ENCODE measurements at regions of chr19 and their contacts with region 1.

Region 1: DNA sequence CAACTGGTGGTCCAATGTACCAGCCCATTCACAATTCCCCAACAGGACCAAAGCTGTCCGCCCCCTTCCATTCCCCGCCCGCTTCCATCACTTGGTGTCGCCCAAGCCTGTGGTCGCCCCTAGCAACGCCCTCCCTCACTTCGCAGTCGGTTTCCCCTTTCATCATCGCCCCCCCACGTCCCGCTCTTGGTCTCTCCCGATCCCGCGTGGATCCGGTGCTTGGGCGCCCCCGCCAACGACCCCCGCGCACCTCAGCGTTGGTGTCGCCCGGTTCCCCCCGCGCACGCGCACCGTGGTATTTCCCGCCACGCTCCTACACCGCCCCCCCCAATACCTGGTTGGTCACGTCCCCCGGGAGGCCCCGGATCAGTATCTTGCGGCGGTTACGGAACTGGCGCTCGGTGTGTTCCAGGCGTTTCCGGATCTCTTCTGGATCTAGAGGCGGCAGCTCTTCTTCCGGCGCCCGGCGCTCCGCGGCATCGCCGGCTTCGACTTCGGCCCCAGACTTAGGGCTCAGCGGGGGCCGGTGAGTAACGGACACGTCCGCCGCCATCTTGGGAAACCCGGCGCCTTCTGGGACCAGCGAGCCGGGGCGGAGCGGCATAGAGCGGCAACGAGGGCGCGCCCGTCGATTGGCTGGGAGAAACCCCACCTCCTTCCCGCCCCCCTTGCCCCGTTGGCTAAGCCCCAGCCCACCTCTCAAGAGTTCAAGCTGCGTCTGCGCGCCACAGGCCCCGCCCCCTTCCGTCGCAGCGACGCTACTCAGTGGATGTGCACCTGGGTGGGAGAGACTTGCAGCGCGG is at the start of gene RAVER1:
- DNase-seq: peak; percentile 96 to 99 (median 98)

Region 2: DNA sequence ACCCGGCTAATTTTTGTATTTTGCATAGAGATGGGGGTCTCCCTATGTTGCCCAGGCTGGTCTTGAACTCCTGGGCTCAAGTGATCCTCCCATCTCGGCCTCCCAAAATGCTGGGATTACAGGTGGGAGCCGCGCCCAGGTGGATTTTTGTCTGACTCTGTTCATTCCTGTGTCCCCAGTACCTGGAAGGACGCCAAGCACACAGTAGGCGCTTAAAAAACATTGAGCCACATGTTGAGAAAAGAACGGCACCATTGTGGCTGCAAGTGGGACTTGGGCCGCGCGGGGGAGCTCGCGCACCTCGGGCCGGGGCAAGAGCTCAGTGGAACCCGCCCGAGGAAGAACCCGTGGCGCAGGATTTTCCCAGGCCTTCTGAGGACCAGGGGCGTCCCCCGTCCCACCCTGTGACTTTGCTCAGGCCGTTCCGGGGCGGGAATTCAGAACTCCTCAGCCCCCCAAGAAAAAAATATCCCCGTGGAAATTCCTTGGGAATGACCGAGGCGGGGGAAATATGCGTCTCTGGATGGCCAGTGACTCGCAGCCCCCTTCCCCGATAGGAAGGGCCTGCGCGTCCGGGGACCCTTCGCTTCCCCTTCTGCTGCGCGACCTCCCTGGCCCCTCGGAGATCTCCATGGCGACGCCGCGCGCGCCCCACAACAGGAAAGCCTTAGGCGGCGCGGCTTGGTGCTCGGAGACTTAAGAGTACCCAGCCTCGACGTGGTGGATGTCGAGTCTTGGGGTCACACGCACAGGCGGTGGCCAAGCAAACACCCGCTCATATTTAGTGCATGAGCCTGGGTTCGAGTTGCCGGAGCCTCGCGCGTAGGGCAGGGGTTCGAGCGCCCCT is 63.6 kb before region 1 on chr19:
- intact Hi-C with region 1: loop called (anchors 10 kb)
- DNase-seq: peak; percentile 61 to 97 (median 82)

Region 3: DNA sequence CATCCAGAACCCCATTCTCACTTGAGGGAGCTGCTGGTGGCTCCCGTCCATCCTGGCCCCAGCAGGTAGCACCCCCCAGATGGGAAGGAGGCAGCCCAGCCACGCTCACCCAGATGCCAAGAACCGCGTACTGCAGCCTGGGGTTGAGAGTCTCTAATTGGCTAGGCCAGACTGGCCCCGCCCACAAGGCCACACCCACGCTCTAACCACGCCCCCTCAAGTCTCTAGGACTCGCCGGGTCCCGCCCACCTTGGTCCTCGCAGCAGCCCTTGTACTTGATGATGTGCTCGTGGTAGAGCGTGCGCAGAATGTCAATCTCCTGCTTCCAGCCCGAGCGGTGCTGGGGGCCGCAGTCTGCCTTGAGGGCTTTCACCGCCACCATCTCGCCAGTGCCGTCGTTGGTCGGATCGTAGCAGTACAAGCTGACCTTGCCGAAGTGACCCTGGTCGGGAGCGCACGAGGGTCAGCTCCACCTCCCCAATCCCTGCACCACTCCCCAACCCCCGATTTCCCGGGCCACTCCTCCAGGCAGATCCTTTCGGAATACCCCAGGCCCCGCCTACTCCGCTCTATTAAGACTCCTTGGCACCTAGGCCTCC is 20.7 kb after region 1 on chr19:
- intact Hi-C with region 1: no loop called
- DNase-seq: no peak

Region 4: DNA sequence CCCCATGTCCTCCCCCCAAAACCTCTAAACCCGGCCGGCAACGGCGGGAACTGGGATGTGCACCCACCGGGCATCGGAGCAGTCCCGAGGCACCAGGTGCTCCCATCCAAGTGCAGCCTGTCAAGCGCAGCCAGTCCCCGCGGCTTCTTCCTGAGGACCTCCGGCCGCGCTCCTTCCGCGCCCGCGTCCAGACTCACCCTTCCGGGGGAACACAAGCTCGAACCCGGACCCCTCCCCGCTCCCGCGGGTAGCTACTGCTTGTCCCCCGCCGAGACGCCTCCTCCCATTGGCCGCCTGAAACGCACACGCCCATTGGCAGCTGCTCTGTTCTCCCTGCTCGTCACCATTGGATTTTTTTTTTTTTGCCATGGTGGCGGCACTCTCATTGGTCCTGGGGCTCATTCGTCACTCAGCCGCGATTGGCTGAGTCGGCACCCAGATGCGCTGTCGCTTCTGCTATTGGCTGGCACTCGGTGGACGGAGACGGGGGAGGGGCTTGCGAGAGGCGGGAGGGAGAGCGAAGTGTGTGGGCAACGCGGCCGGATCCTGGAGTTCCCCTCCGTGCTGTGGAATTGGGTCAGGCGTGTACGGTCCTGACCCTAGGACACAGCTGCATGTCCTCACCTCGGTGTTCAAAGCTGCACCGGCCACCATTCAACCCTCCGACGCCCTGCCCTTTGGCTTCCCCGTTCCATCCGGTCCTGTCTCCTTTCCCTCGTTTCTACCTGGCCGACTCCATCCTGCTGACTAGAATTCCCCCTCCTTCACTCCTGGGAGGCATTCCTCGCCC is 47.4 kb after region 1 on chr19 and contains the start of gene TYK2:
- intact Hi-C with region 1: loop called (anchors 5 kb)
- DNase-seq: peak; percentile 95 to 100 (median 97)

Measured in posterior cingulate gyrus (tissue), 11 donors.